ENCODE measurements at regions of chrX and their contacts with region 1.

Region 1: GRCh38 chrX:150547375-150548115 is 20.9 kb upstream of the MTM1 start:
- DNase-seq: peak; percentile 87

Region 2: DNA sequence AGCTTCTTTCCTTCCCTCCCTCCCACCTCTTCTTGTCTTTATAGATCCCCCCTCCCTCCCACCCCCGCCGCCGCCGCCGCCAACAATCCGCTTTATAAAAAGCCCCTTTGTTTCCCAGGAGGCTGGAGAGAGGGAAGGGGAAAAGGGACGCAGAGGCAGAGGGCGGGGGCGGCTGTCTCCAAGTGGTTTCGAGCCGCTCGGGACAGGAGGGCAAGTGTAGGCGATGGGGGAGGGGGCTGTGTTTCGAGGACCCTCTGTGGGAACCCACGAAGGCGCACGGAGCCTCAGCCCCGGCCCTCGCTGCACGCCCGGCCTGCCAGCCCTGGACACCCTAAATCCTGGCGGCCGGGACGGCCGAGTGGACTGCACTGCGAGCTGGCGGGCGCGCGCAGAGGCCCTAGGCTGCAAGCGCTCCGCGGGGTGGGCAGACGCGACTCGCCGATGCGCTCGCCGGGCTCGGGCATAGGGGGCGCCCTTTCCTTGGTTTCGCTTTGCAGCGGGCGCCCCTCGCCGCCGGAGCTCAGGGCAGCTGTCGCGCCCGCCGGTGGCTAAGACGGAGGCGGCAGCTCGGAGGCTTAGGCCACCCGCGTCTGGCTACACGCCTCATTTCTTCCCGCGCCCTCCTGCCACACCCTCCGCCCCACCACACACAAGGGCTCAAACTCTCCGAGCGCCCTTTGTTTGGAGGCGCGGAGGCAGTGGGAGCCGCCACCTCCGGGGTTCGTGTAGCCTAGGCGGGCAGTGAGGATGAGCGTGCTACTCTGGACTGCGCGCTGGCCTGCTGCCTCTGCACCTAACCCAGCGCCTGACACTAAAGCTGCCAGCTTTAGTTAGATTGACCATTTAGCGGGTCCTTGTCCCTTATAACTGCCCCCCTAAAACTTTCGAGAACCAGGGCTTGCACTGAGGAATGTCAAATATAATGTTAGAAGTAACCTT is 182.2 kb before region 1 on chrX:
- intact Hi-C with region 1: loop called (anchors 10 kb)
- DNase-seq: peak; percentile 87

Region 3: DNA sequence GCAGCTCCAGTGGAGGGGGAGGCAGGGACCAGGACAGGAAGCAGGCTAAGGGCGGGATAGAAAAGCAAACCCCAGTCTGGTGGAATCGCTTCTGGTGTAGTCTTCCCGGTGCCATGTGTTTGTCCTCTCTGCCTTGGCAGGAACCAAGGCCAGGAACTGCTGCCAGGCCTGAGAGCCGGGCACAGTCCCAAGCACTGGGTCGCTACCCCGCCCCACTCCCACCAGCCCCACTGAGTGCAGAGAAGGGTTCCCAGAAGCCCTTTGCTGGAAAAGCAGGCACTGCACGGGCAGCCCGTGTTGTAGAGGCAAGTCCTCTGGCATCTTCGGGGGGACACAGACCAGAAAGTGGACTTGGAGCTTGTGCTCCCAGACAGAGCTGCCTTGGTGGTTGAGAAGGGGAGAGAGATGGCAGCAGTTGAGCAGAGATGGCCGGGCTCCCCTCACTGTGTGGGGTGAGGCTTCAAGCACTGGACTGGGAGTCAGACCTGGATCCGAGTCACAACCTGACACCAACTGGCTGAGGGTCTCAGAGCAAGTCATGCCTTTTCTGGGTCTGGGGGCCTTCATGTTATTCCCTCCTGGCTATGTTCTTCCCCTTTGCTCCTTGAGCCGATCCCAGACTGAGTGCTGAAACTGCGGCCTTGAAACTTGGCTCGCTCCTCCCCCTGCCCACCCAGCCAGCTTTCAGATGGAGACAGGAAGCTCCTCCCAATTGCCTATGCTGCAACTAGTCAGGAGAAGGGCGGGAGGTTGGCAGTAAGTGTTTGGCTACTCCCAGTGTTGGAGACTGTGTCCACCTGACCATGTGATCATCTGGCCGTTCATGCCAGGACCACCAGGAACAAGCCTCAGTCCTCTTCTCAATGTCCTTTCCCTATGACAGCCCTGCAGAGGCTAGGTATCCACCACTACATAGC is 38.8 kb before region 1 on chrX:
- intact Hi-C with region 1: loop called (anchors 5 kb)
- DNase-seq: no peak

Region 4: DNA sequence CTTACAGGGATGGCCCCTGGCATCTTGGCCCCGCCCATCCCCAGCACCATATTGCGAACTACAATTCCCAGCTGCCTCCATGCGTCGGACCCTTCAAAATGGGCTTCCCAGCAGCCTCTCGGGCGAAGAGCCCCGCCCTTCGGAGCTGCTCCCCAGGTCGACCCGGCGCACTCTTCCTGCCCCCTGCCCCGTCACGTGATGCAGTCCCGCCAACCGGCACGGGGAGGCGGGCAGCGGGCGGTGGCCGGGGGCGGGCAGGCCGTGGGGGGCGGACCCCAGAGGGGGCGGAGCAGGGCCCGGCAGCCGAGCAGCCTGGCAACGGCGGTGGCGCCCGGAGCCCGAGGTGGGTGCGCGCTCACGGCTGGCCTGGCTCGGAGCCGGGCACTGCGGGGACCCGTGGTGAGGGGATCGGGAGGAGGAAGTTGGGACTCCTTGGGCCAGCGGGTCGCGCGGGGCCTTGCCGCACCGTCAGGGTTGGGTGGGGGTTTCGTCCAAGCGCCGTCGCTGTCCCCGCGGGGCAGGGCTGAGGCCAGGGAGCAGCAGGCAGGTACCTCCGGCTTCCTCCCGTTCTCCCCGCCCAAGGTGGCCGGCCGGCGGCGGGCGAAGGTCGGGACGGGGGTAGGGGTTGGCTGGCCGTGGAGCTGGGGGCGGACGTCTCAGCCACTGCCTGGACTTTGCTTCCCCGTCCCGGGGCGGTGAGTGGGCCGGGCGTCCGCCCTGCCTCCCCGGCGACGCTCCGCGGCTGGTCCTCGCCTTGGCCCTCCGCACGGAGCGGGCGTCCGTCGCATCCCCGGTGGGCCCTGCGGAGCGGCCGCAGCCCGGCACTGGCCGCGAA is 21.0 kb after region 1 on chrX and contains the start of gene MTM1:
- intact Hi-C with region 1: loop called (anchors 2 kb)
- DNase-seq: peak; percentile 97
- total RNA-seq, gene MTM1: 9.5 TPM

Measured in cardiac septum (tissue), 1 donor.